Activated B cell treated with CpG ODN at 0.5 μM for 24 hours (primary cell): ENCODE measurements at regions of chr2 and their contacts with region 1.

Region 1: GRCh38 chr2:14661163-14661562 is 28.6 kb downstream of the LRATD1 start:
- DNase-seq: no peak
- ATAC-seq: no peak
- H3K4me3 Mint-ChIP-seq: no peak overlapping the region
- H3K27ac Mint-ChIP-seq: no peak overlapping the region
- H3K4me1 Mint-ChIP-seq: no peaks in the 10 kb centered on the region
- H3K27me3 Mint-ChIP-seq: peaks cover 1% of the 10 kb centered on the region
- CTCF ChIP-seq: no peak

Region 2: GRCh38 chr2:13950761-13951160 is 710.4 kb before region 1 on chr2:
- CTCF ChIA-PET with region 1: no interaction called
- POLR2A ChIA-PET with region 1: no interaction called
- intact Hi-C with region 1: no loop called
- DNase-seq: no peak
- ATAC-seq: no peak
- H3K4me3 Mint-ChIP-seq: no peak overlapping the region
- H3K27ac Mint-ChIP-seq: no peak overlapping the region
- H3K4me1 Mint-ChIP-seq: no peaks in the 10 kb centered on the region
- H3K27me3 Mint-ChIP-seq: no peaks in the 10 kb centered on the region
- CTCF ChIP-seq: no peak

Region 3: DNA sequence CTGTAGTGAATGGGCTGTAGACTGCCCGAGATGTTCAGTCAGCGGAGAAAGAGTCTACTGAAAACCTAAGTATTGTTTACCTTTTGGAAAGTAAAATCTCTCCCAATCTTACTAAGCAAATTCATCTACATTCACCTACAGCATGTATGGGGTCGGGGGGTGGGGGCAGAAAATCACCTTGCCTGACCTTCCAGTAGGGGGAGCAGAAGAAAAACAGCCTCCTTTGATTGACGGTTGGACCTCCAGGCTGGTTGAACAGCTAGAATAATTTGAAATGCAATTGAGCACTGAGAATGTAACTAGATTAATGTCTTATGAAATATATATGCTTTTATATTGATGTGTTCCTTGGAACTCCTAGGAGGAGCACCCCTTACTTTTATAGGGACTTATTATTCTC is 18.7 kb before region 1 on chr2:
- CTCF ChIA-PET with region 1: no interaction called
- POLR2A ChIA-PET with region 1: no interaction called
- intact Hi-C with region 1: loop called (anchors 2 kb)
- DNase-seq: no peak
- ATAC-seq: no peak
- H3K4me3 Mint-ChIP-seq: no peak overlapping the region
- H3K27ac Mint-ChIP-seq: no peak overlapping the region
- H3K4me1 Mint-ChIP-seq: no peaks in the 10 kb centered on the region
- H3K27me3 Mint-ChIP-seq: no peaks in the 10 kb centered on the region
- CTCF ChIP-seq: no peak

Region 4: DNA sequence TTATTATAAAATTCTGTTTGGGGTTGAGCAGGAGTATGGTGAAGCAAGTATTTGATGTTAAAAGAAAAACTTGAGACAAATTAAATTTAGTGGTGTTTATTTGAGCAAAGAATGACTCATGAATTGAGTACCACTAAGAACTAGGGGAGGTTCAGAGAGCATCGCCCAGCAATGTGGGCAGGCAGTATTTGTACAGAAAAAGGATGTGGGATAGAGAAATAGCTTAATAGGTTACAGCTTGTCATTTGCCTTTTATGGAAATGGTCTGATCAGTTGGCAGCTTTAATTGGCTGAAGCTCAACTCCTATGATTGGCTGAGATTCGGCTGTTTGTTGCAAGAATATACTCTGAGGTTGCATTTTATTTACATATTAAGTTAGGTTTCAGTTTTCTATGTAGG is 39.6 kb after region 1 on chr2:
- CTCF ChIA-PET with region 1: no interaction called
- POLR2A ChIA-PET with region 1: no interaction called
- intact Hi-C with region 1: no loop called
- DNase-seq: no peak
- ATAC-seq: no peak
- H3K4me3 Mint-ChIP-seq: no peak overlapping the region
- H3K27ac Mint-ChIP-seq: no peak overlapping the region
- H3K4me1 Mint-ChIP-seq: no peaks in the 10 kb centered on the region
- H3K27me3 Mint-ChIP-seq: no peaks in the 10 kb centered on the region
- CTCF ChIP-seq: no peak

Region 5: DNA sequence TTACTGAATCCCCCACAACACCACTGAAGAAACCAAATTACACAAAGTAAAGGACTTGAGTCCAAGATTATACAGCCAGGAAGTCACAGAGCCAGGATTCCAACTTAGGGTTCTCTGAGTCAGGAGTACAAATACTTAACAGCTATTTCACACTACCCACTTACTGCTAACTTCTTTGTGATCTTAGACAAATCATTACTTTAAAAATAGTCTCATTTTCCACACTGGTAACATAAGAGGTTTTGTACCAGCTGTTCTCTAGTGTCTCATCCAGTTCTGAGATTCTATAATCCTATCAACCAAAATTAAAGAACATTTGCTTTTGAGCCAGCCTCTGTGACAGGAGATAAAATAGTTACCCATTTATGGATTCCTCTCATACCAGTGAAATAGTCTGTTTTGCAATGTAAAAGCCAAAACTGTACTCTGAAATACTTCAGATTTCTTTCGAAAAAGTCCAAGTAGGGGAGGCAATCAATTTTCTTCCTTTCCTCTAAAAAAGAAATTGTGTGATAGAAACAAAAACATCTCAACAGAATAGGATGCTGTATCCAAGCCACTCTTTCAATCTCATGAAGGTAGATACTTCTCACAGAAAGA is 129.0 kb after region 1 on chr2:
- CTCF ChIA-PET with region 1: no interaction called
- POLR2A ChIA-PET with region 1: no interaction called
- intact Hi-C with region 1: no loop called
- DNase-seq: no peak
- ATAC-seq: no peak
- H3K4me3 Mint-ChIP-seq: no peak overlapping the region
- H3K27ac Mint-ChIP-seq: no peak overlapping the region
- H3K4me1 Mint-ChIP-seq: no peaks in the 10 kb centered on the region
- H3K27me3 Mint-ChIP-seq: no peaks in the 10 kb centered on the region
- CTCF ChIP-seq: no peak